ENCODE measurements at regions of chr2 and their contacts with region 1.

Region 1: DNA sequence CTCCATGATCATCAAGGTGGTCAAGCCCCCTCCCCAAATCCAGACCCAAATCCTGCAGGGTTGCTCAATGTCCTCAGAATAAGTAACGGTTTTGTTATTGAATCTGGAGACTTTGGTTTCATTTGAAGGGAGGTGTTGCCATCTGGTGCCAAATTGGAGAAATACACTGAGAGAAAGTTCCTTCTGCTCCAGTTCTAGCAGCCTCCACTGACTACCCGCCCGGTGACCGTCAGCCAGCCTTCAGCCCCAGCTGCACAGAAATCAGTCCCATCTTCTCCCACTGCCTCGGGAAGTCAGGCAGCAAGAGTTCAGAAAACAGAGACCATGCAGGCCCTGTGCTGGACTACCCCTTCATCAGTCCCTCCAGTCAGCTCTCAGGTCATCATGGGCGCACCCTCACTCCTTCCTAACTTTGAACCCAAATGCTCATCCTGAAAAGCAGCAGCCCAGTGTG is 38.7 kb downstream of the PKDCC start:
- DNase-seq: peak; percentile 83
- H3K4me3 ChIP-seq: no peak overlapping the region
- H3K27ac ChIP-seq: no peak overlapping the region
- H3K4me1 ChIP-seq: no peaks in the 10 kb centered on the region
- H3K27me3 ChIP-seq: no peaks in the 10 kb centered on the region
- CTCF ChIP-seq: peak; percentile 79

Region 2: GRCh38 chr2:41846962-41847361 is 239.6 kb before region 1 on chr2:
- CTCF ChIA-PET with region 1: interaction called, 32 read pairs
- POLR2A ChIA-PET with region 1: no interaction called
- intact Hi-C with region 1: no loop called
- DNase-seq: no peak
- H3K4me3 ChIP-seq: no peak overlapping the region
- H3K27ac ChIP-seq: no peak overlapping the region
- H3K4me1 ChIP-seq: no peaks in the 10 kb centered on the region
- H3K27me3 ChIP-seq: peaks cover 7% of the 10 kb centered on the region
- CTCF ChIP-seq: no peak

Region 3: GRCh38 chr2:41853427-41854216 is 232.9 kb before region 1 on chr2:
- CTCF ChIA-PET with region 1: interaction called, 32 read pairs
- POLR2A ChIA-PET with region 1: no interaction called
- intact Hi-C with region 1: loop called (anchors 1 kb)
- DNase-seq: peak; percentile 82
- H3K4me3 ChIP-seq: no peak overlapping the region
- H3K27ac ChIP-seq: no peak overlapping the region
- H3K4me1 ChIP-seq: no peaks in the 10 kb centered on the region
- H3K27me3 ChIP-seq: no peaks in the 10 kb centered on the region
- CTCF ChIP-seq: peak; percentile 81

Measured in A673 (cell line).